ENCODE measurements at regions of chr20 and their contacts with region 1.

Region 1: DNA sequence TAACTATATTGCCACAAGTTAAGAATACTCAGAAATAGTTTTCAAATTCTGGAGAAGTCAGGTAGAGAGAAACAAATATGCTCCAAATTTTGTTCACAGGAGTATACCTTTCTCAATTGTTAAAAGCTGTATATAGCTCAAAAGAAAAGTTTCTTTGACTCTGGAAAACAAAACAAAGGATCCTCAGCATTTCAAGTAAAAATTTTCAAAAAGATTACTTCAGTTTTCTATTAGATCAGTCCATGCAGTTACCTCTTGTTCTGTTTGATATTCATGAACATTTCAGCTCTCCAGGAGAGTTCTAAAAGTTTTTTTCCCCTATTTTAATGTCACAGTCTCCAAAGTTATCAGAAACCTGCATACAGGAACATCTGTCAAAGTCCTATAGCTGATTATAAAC is 30.4 kb upstream of the ENTPD6 start:
- DNase-seq: no peak
- H3K4me3 ChIP-seq: no peak overlapping the region
- H3K27ac ChIP-seq: no peak overlapping the region
- H3K4me1 ChIP-seq: no peaks in the 10 kb centered on the region
- H3K27me3 ChIP-seq: peaks cover 2% of the 10 kb centered on the region
- CTCF ChIP-seq: no peak

Region 2: DNA sequence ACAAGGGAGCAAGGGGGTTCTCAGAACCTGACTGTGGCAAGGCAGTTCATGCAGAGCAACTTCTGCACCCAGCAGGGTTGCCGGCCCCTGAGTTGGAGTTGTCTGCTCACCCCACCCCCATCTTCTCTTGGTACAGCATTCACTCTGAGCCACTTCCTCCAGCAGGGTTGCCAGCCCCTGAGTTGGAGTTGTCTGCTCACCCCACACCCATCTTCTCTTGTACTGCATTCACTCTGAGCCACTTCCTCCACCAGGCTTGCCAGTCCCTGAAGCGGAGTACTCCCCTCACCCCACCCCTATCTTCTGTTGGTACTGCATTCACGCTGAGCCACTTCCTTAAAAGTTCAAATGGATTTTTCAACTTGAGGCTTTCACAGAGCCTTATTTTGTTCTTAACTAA is 775.4 kb before region 1 on chr20:
- CTCF ChIA-PET with region 1: no interaction called
- dilution Hi-C with region 1: no loop called
- in situ Hi-C with region 1: no loop called
- intact Hi-C with region 1: no loop called
- DNase-seq: no peak
- H3K4me3 ChIP-seq: no peak overlapping the region
- H3K27ac ChIP-seq: no peak overlapping the region
- H3K4me1 ChIP-seq: no peaks in the 10 kb centered on the region
- H3K27me3 ChIP-seq: no peaks in the 10 kb centered on the region
- CTCF ChIP-seq: no peak

Region 3: DNA sequence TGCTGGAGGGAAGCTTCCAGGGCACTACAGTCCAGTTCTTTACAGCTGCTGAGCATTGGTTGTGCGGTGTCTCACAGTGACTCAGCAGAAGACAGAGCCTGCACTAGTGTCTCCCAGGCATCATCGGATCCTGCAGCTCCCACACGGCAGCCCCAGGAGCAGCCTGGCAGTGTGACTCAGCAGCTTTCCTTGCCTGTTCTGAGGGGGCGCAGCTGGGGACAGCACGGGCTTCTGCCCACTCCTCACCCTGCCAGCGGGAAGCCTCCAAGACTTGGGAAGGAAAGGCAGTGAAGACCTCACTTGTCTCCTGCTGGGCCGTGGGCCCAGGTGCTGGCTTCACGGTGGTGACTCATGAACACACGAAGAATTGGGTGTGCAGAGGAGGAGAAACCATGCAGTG is 530.3 kb before region 1 on chr20:
- CTCF ChIA-PET with region 1: no interaction called
- dilution Hi-C with region 1: no loop called
- in situ Hi-C with region 1: no loop called
- intact Hi-C with region 1: no loop called
- DNase-seq: peak; percentile 81
- H3K4me3 ChIP-seq: no peak overlapping the region
- H3K27ac ChIP-seq: no peak overlapping the region
- H3K4me1 ChIP-seq: peaks cover 18% of the 10 kb centered on the region
- H3K27me3 ChIP-seq: no peaks in the 10 kb centered on the region
- CTCF ChIP-seq: no peak

Region 4: GRCh38 chr20:25129908-25130307 is 35.2 kb before region 1 on chr20:
- CTCF ChIA-PET with region 1: no interaction called
- dilution Hi-C with region 1: loop called (anchors 5 kb)
- in situ Hi-C with region 1: no loop called
- intact Hi-C with region 1: no loop called
- DNase-seq: no peak
- H3K4me3 ChIP-seq: no peak overlapping the region
- H3K27ac ChIP-seq: no peak overlapping the region
- H3K4me1 ChIP-seq: no peaks in the 10 kb centered on the region
- H3K27me3 ChIP-seq: no peaks in the 10 kb centered on the region
- CTCF ChIP-seq: no peak

Region 5: GRCh38 chr20:25632940-25633790 is 468.0 kb after region 1 on chr20:
- CTCF ChIA-PET with region 1: no interaction called
- dilution Hi-C with region 1: no loop called
- in situ Hi-C with region 1: no loop called
- intact Hi-C with region 1: no loop called
- DNase-seq: peak; percentile 82
- H3K4me3 ChIP-seq: no peak overlapping the region
- H3K27ac ChIP-seq: peak overlapping the region; percentile 18
- H3K4me1 ChIP-seq: peaks cover 12% of the 10 kb centered on the region
- H3K27me3 ChIP-seq: no peaks in the 10 kb centered on the region
- CTCF ChIP-seq: no peak